Breast epithelium (tissue), 4 donors: ENCODE measurements at regions of chr20 and their contacts with region 1.

Region 1: DNA sequence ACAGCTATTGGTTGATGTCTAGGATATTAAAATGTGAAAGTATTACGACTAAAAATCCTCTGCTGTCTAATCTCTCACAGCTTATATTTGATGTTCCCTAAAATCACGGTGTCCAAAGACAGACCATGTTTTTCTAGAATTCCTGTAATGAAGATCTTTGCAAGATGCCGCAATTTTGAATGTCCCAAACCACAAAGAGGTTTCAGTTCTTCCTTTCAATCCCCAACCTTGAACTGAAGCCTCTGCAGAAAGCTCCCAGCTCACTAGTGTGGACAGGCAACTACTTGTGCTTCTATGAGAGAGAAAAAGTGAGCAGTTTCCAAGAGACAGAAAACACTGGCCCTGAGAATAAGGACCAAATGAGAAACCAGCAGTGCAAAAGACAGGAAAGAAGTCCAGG is 370.1 kb downstream of the FOXA2 start:
- DNase-seq: no peak
- H3K4me3 ChIP-seq: no peak overlapping the region
- H3K27ac ChIP-seq: no peak overlapping the region
- H3K4me1 ChIP-seq: no peaks in the 10 kb centered on the region
- H3K27me3 ChIP-seq: peaks cover 0 to 25% of the 10 kb centered on the region in 2 donors
- CTCF ChIP-seq: no peak
- POLR2A ChIP-seq: no peak

Region 2: DNA sequence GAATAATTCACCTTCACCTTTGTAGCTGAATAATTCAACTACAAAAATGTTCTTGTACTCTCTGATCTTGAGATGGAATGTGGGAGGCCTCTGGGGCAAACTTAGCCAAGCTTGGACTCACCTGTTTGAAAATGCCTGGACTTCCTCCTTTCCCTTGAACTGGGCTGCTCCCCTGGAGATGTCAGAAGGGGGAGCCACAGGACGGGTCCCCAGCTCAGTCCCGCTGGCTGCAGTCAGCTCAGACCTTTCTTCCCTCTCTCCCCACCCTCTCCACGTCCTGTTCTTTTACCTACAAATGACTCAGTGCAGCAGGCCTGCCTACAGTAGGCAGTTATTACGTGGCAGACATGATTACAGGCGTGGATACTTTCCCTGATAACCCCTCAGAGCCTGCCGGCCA is 1370.3 kb before region 1 on chr20:
- intact Hi-C with region 1: no loop called
- DNase-seq: no peak
- H3K4me3 ChIP-seq: no peak overlapping the region
- H3K27ac ChIP-seq: no peak overlapping the region
- H3K4me1 ChIP-seq: no peaks in the 10 kb centered on the region
- H3K27me3 ChIP-seq: no peaks in the 10 kb centered on the region
- CTCF ChIP-seq: no peak
- POLR2A ChIP-seq: no peak

Region 3: GRCh38 chr20:22020201-22020600 is 194.1 kb before region 1 on chr20:
- intact Hi-C with region 1: loop called (anchors 5 kb)
- DNase-seq: no peak
- H3K4me3 ChIP-seq: no peak overlapping the region
- H3K27ac ChIP-seq: no peak overlapping the region
- H3K4me1 ChIP-seq: no peaks in the 10 kb centered on the region
- H3K27me3 ChIP-seq: no peaks in the 10 kb centered on the region
- CTCF ChIP-seq: no peak
- POLR2A ChIP-seq: no peak

Region 4: GRCh38 chr20:22232923-22233322 is 18.6 kb after region 1 on chr20:
- intact Hi-C with region 1: no loop called
- DNase-seq: no peak
- H3K4me3 ChIP-seq: no peak overlapping the region
- H3K27ac ChIP-seq: no peak overlapping the region
- H3K4me1 ChIP-seq: no peaks in the 10 kb centered on the region
- H3K27me3 ChIP-seq: peaks cover 0 to 22% of the 10 kb centered on the region in 2 donors
- CTCF ChIP-seq: no peak
- POLR2A ChIP-seq: no peak

Region 5: DNA sequence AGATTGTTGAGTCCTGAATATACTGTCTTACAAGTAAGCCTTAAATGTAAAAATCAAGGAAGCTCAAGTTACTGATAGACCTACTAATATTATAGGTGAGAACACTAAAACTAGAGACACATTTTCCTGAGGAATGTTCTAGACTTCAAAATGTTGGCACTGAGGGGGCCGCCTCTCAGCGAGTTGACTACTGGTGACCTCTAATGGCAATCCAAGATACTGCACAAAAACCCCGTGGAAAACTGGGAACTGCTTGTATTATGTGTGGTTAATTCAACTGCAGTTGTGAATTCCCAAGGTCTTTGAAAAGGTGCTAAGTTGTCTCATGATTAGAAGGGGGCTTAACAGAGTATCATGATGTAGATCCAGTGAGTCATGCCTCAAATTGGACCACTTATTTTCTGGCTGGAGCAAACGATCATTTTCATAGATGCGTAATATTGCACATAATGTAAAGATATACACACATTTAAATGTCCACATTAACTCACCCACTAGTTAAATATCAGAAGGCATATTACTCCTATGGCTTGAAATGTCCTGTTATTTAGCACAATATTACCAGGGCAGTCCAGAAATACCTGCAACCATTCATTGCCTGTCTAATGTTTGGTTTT is 33.9 kb after region 1 on chr20:
- intact Hi-C with region 1: no loop called
- DNase-seq: no peak
- H3K4me3 ChIP-seq: no peak overlapping the region
- H3K27ac ChIP-seq: no peak overlapping the region
- H3K4me1 ChIP-seq: no peaks in the 10 kb centered on the region
- H3K27me3 ChIP-seq: no peaks in the 10 kb centered on the region
- CTCF ChIP-seq: peak in 1 of 3 donors; percentile 18
- POLR2A ChIP-seq: no peak